ENCODE measurements at regions of chr6 and their contacts with region 1.

Region 1: GRCh38 chr6:44655412-44656342 is 268.2 kb downstream of the CDC5L start:
- DNase-seq: peak; percentile 77
- H3K4me3 Mint-ChIP-seq: peak overlapping the region; percentile 21
- H3K27ac Mint-ChIP-seq: peak overlapping the region; percentile 71
- H3K4me1 Mint-ChIP-seq: peaks cover 10% of the 10 kb centered on the region
- H3K27me3 Mint-ChIP-seq: no peaks in the 10 kb centered on the region

Region 2: GRCh38 chr6:44630125-44631028 is 25.3 kb before region 1 on chr6:
- CTCF ChIA-PET with region 1: interaction called, 15 read pairs
- POLR2A ChIA-PET with region 1: no interaction called
- DNase-seq: peak; percentile 60
- H3K4me3 Mint-ChIP-seq: no peak overlapping the region
- H3K27ac Mint-ChIP-seq: no peak overlapping the region
- H3K4me1 Mint-ChIP-seq: peaks cover 24% of the 10 kb centered on the region
- H3K27me3 Mint-ChIP-seq: peaks cover 3% of the 10 kb centered on the region

Region 3: DNA sequence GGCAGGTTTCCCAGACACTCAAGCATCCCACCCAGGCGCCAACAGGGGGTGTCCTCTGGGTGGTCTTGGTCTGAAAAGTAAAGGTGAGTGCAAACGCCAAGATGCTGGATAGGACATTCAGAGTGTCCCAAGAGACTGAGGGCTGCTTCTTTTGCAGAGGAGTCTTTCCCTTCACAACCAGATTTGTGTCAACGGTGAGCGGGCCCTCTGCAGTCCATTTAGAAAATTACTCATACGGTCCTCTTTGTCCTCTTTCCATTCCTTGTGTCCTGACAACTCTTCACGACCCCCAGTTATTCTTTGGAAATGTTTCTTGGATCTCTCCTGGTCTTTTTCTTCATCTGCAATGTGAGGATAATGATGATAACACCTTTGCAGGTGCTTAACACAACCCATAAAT is 10.4 kb before region 1 on chr6:
- CTCF ChIA-PET with region 1: interaction called, 11 read pairs
- POLR2A ChIA-PET with region 1: interaction called, 5 read pairs
- DNase-seq: no peak
- H3K4me3 Mint-ChIP-seq: no peak overlapping the region
- H3K27ac Mint-ChIP-seq: no peak overlapping the region
- H3K4me1 Mint-ChIP-seq: peaks cover 49% of the 10 kb centered on the region
- H3K27me3 Mint-ChIP-seq: no peaks in the 10 kb centered on the region

Region 4: GRCh38 chr6:44685213-44685612 is 29.5 kb after region 1 on chr6:
- CTCF ChIA-PET with region 1: no interaction called
- POLR2A ChIA-PET with region 1: no interaction called
- DNase-seq: no peak
- H3K4me3 Mint-ChIP-seq: no peak overlapping the region
- H3K27ac Mint-ChIP-seq: no peak overlapping the region
- H3K4me1 Mint-ChIP-seq: peaks cover 2% of the 10 kb centered on the region
- H3K27me3 Mint-ChIP-seq: peaks cover 2% of the 10 kb centered on the region

Region 5: GRCh38 chr6:45377554-45378333 is 722.1 kb after region 1 on chr6 and contains the start of gene SUPT3H:
- CTCF ChIA-PET with region 1: interaction called, 10 read pairs
- POLR2A ChIA-PET with region 1: interaction called, 9 read pairs
- DNase-seq: peak; percentile 90
- H3K4me3 Mint-ChIP-seq: peak within 1 kb of the TSS; percentile 92
- H3K27ac Mint-ChIP-seq: peak within 1 kb of the TSS; percentile 95
- H3K4me1 Mint-ChIP-seq: peaks cover 27% of the 10 kb centered on the region
- H3K27me3 Mint-ChIP-seq: no peaks in the 10 kb centered on the region
- total RNA-seq, gene SUPT3H: 7.4 to 9.7 TPM

Region 6: GRCh38 chr6:45421709-45422502 is 766.2 kb after region 1 on chr6:
- CTCF ChIA-PET with region 1: interaction called, 26 read pairs
- POLR2A ChIA-PET with region 1: interaction called, 5 read pairs
- DNase-seq: peak; percentile 65
- H3K4me3 Mint-ChIP-seq: peak overlapping the region; percentile 99
- H3K27ac Mint-ChIP-seq: peak overlapping the region; percentile 98
- H3K4me1 Mint-ChIP-seq: peaks cover 42% of the 10 kb centered on the region
- H3K27me3 Mint-ChIP-seq: peaks cover 2% of the 10 kb centered on the region

Region 7: DNA sequence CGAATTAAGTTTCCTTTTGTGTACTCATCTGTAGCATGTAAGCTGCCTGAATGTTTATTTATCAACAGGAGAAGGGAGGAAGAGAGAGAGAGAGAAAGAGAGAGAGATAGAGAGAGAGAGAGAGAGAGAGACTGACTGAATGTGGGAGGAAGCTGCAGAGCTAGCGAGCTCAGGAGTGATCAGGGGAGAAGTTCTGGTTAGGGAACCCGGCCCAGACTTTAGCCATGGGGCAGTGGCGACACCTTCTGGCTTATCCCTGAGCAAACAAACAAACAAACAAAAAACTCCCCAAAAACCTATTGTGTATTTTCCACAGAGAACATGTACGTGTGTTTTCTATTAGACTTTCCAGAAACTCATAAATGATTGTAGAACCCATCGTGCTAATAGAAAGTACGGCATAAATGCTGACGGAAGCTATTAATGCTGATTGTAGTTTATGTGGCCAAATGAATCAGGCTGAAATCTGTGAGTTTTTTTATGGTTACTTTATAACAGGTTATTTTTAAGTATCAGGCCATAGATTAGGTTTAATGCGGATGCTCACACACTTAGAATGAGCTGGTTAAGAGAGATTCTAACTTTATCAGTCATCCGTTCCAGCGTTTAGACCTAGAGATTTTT is 1267.2 kb after region 1 on chr6:
- CTCF ChIA-PET with region 1: interaction called, 36 read pairs
- POLR2A ChIA-PET with region 1: no interaction called
- DNase-seq: peak; percentile 82
- H3K4me3 Mint-ChIP-seq: peak overlapping the region; percentile 13
- H3K27ac Mint-ChIP-seq: peak overlapping the region; percentile 80
- H3K4me1 Mint-ChIP-seq: peaks cover 54% of the 10 kb centered on the region
- H3K27me3 Mint-ChIP-seq: no peaks in the 10 kb centered on the region

Measured in activated CD4-positive, alpha-beta memory T cell treated with anti-CD3 and anti-CD28 coated beads, Interleukin-2, amount 10 ng/mL, durations not matched to agents 7 days and 5 days (primary cell).